CD4-positive, alpha-beta memory T cell (primary cell): ENCODE measurements at regions of chr1 and their contacts with region 1.

Region 1: DNA sequence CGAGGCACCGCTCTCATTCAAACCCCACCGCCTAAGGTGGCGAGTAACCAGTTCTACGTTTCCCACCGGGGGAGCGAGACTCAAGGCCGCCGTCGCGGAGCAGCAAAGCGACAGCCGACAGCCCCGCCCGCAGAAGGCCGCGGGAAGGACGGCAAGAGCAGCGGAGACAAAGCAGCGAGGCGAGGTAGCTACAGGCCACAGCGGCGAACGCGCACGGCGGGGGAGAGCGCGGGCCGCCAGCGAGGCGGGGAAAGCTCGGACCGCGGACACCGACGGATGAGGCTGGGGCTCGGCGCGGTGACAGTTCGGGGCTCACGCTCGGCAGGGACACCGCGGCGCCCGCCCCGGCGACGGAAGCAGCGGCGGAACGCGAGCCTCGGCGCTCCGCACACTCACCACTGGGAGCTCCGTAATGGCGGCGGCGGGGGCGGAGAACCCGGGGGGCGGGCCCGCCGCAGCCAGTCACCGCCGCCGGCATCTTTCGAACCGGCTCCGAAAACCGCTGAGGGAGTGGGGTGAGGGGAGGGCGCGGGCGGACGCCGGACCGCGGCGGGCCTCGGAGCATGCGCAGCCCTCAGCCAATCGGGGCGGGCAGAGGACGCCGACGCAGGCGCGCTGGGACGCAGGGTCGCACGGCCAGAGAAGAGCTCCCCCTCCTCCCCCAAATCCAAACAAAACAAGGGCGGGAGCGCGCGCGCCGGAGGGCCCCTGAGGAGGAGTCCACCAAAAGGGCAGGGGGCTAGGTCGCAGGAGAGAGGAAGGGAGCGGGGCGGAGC is 666 bp downstream of the HP1BP3 start:
- DNase-seq: peak; percentile 94 to 99 (median 97)
- H3K4me3 ChIP-seq: peak overlapping the region; percentile 64 to 100
- H3K4me3 Mint-ChIP-seq: peak overlapping the region; percentile 92 to 100 (median 98)
- H3K27ac ChIP-seq: peak overlapping the region; percentile 86
- H3K27ac Mint-ChIP-seq: peak overlapping the region; percentile 97 to 99 (median 97)
- H3K4me1 ChIP-seq: peaks cover 43% of the 10 kb centered on the region
- H3K4me1 Mint-ChIP-seq: peaks cover 25 to 46% (median 35%) of the 10 kb centered on the region in 4 donors
- H3K27me3 ChIP-seq: no peaks in the 10 kb centered on the region
- H3K27me3 Mint-ChIP-seq: peaks cover 0 to 3% of the 10 kb centered on the region in 2 donors

Region 2: GRCh38 chr1:20454004-20454403 is 332.4 kb before region 1 on chr1:
- CTCF ChIA-PET with region 1: no interaction called
- POLR2A ChIA-PET with region 1: no interaction called
- intact Hi-C with region 1: no loop called
- DNase-seq: no peak
- H3K4me3 ChIP-seq: no peak overlapping the region
- H3K4me3 Mint-ChIP-seq: no peak overlapping the region
- H3K27ac ChIP-seq: no peak overlapping the region
- H3K27ac Mint-ChIP-seq: no peak overlapping the region
- H3K4me1 ChIP-seq: no peaks in the 10 kb centered on the region
- H3K4me1 Mint-ChIP-seq: no peaks in the 10 kb centered on the region
- H3K27me3 ChIP-seq: no peaks in the 10 kb centered on the region
- H3K27me3 Mint-ChIP-seq: peaks cover 6 to 18% of the 10 kb centered on the region in 2 donors

Region 3: GRCh38 chr1:20633190-20634064 is 153.0 kb before region 1 on chr1 and contains the start of gene PINK1:
- CTCF ChIA-PET with region 1: interaction called, 3 read pairs
- POLR2A ChIA-PET with region 1: interaction called, 13 read pairs
- intact Hi-C with region 1: no loop called
- DNase-seq: peak; percentile 78 to 92 (median 87)
- H3K4me3 ChIP-seq: peak within 1 kb of the TSS; percentile 45 to 62
- H3K4me3 Mint-ChIP-seq: peak within 1 kb of the TSS; percentile 89 to 96 (median 92)
- H3K27ac ChIP-seq: peak within 1 kb of the TSS; percentile 68
- H3K27ac Mint-ChIP-seq: peak within 1 kb of the TSS; percentile 85 to 95 (median 91)
- H3K4me1 ChIP-seq: peaks cover 16% of the 10 kb centered on the region
- H3K4me1 Mint-ChIP-seq: peaks cover 4 to 17% (median 12%) of the 10 kb centered on the region in 4 donors
- H3K27me3 ChIP-seq: no peaks in the 10 kb centered on the region
- H3K27me3 Mint-ChIP-seq: peaks cover 1 to 2% of the 10 kb centered on the region in 2 donors
- total RNA-seq, gene PINK1: 19.5 to 21.7 TPM

Region 4: GRCh38 chr1:20732588-20733360 is 53.7 kb before region 1 on chr1 and contains the start of gene SH2D5:
- CTCF ChIA-PET with region 1: interaction called, 3 read pairs
- POLR2A ChIA-PET with region 1: interaction called, 5 read pairs
- intact Hi-C with region 1: loop called (anchors 5 kb)
- DNase-seq: peak; percentile 54 to 87 (median 63)
- H3K4me3 ChIP-seq: peak within 1 kb of the TSS; percentile 68 to 69
- H3K4me3 Mint-ChIP-seq: peak within 1 kb of the TSS; percentile 78 to 91 (median 88)
- H3K27ac ChIP-seq: no peak within 1 kb of the TSS
- H3K27ac Mint-ChIP-seq: peak within 1 kb of the TSS in 6 of 7 donors; percentile 54 to 85 (median 77)
- H3K4me1 ChIP-seq: peaks cover 17% of the 10 kb centered on the region
- H3K4me1 Mint-ChIP-seq: peaks cover 10 to 23% (median 13%) of the 10 kb centered on the region in 4 donors
- H3K27me3 ChIP-seq: no peaks in the 10 kb centered on the region
- H3K27me3 Mint-ChIP-seq: peaks cover 3 to 19% of the 10 kb centered on the region in 2 donors
- total RNA-seq, gene SH2D5: 0.38 TPM in 1 of 2 experiments, not detected in the other

Region 5: GRCh38 chr1:20767271-20767670 is 19.2 kb before region 1 on chr1:
- CTCF ChIA-PET with region 1: no interaction called
- POLR2A ChIA-PET with region 1: interaction called, 16 read pairs
- intact Hi-C with region 1: no loop called
- DNase-seq: no peak
- H3K4me3 ChIP-seq: no peak overlapping the region
- H3K4me3 Mint-ChIP-seq: no peak overlapping the region
- H3K27ac ChIP-seq: no peak overlapping the region
- H3K27ac Mint-ChIP-seq: no peak overlapping the region
- H3K4me1 ChIP-seq: no peaks in the 10 kb centered on the region
- H3K4me1 Mint-ChIP-seq: peaks cover 0 to 3% (median under 1%) of the 10 kb centered on the region in 4 donors
- H3K27me3 ChIP-seq: no peaks in the 10 kb centered on the region
- H3K27me3 Mint-ChIP-seq: no peaks in the 10 kb centered on the region

Region 6: GRCh38 chr1:21176586-21177555 is 390.4 kb after region 1 on chr1 and contains the start of gene EIF4G3:
- CTCF ChIA-PET with region 1: no interaction called
- POLR2A ChIA-PET with region 1: interaction called, 8 read pairs
- intact Hi-C with region 1: loop called (anchors 2 kb)
- DNase-seq: peak; percentile 98 to 100 (median 98)
- H3K4me3 ChIP-seq: peak within 1 kb of the TSS; percentile 57 to 75
- H3K4me3 Mint-ChIP-seq: peak within 1 kb of the TSS; percentile 89 to 95 (median 91)
- H3K27ac ChIP-seq: peak within 1 kb of the TSS; percentile 69
- H3K27ac Mint-ChIP-seq: peak within 1 kb of the TSS; percentile 93 to 96 (median 95)
- H3K4me1 ChIP-seq: peaks cover 18% of the 10 kb centered on the region
- H3K4me1 Mint-ChIP-seq: peaks cover 18 to 26% (median 21%) of the 10 kb centered on the region in 4 donors
- H3K27me3 ChIP-seq: no peaks in the 10 kb centered on the region
- H3K27me3 Mint-ChIP-seq: no peaks in the 10 kb centered on the region
- total RNA-seq, gene EIF4G3: 16.6 to 18.0 TPM